ENCODE measurements at regions of chr2 and their contacts with region 1.

Region 1: GRCh38 chr2:133421516-133422312 is 146.5 kb downstream of the NCKAP5 start:
- DNase-seq: peak; percentile 66
- ATAC-seq: peak; percentile 75
- H3K4me3 ChIP-seq: no peak overlapping the region
- H3K27ac ChIP-seq: no peak overlapping the region
- H3K4me1 ChIP-seq: peaks cover 13% of the 10 kb centered on the region
- H3K27me3 ChIP-seq: no peaks in the 10 kb centered on the region
- CTCF ChIP-seq: peak; percentile 22; the same call in 1 of the 2 replicates
- POLR2A ChIP-seq: no peak
- RAD21 ChIP-seq: peak; percentile 20; the same call in 1 of the 2 replicates

Region 2: DNA sequence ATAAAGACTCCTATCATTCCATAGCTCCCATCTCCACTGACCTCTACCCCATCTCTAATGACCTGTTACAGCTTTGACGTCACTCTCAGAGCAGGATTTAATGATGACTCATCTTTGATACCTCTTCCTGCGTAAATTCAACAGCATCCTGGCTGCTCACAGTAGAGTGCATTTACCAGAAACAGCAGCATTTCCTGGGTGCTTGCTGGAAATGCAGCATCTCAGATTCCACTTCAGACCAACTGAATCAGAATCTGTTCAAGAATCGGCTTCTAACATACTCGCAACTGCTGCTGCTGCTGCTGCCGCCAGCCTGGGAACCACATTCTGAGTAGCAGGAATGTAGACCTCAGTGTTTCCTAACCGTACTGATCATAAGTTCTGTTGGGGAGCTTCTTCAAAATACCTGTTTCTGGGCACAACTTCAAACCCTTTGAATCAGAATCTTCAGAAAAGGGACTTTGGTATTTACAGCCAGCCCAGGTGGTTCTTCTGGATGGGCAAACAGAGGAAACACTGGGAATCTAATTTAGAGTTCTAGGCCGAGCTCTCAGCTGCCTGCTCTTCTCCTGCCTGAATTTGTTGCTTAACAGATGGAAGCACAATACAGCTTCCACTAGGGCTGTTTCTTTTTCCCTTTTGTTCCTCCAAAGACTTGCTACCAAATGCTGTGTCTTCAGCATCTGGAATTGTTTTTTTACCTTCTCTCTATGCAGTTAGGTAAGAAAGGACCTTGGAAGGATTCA is 94.9 kb before region 1 on chr2:
- CTCF ChIA-PET with region 1: no interaction called
- POLR2A ChIA-PET with region 1: no interaction called
- dilution Hi-C with region 1: no loop called
- in situ Hi-C with region 1: no loop called
- intact Hi-C with region 1: loop called (anchors 5 kb)
- DNase-seq: peak; percentile 98
- ATAC-seq: peak; percentile 59
- H3K4me3 ChIP-seq: no peak overlapping the region
- H3K27ac ChIP-seq: peak overlapping the region; percentile 92
- H3K4me1 ChIP-seq: peaks cover 34% of the 10 kb centered on the region
- H3K27me3 ChIP-seq: no peaks in the 10 kb centered on the region
- CTCF ChIP-seq: no peak
- POLR2A ChIP-seq: peak; percentile 42; the same call in 1 of the 2 replicates
- RAD21 ChIP-seq: peak; percentile 22

Region 3: GRCh38 chr2:133532919-133533318 is 111.2 kb after region 1 on chr2:
- CTCF ChIA-PET with region 1: no interaction called
- POLR2A ChIA-PET with region 1: no interaction called
- dilution Hi-C with region 1: no loop called
- in situ Hi-C with region 1: no loop called
- intact Hi-C with region 1: loop called (anchors 10 kb)
- DNase-seq: peak; percentile 47
- ATAC-seq: no peak
- H3K4me3 ChIP-seq: no peak overlapping the region
- H3K27ac ChIP-seq: no peak overlapping the region
- H3K4me1 ChIP-seq: peaks cover 4% of the 10 kb centered on the region; the same call in 1 of the 2 replicates
- H3K27me3 ChIP-seq: no peaks in the 10 kb centered on the region
- CTCF ChIP-seq: no peak
- POLR2A ChIP-seq: no peak
- RAD21 ChIP-seq: no peak